Dorsolateral prefrontal cortex (tissue), 120 donors: ENCODE measurements at regions of chr5 and their contacts with region 1.

Region 1: DNA sequence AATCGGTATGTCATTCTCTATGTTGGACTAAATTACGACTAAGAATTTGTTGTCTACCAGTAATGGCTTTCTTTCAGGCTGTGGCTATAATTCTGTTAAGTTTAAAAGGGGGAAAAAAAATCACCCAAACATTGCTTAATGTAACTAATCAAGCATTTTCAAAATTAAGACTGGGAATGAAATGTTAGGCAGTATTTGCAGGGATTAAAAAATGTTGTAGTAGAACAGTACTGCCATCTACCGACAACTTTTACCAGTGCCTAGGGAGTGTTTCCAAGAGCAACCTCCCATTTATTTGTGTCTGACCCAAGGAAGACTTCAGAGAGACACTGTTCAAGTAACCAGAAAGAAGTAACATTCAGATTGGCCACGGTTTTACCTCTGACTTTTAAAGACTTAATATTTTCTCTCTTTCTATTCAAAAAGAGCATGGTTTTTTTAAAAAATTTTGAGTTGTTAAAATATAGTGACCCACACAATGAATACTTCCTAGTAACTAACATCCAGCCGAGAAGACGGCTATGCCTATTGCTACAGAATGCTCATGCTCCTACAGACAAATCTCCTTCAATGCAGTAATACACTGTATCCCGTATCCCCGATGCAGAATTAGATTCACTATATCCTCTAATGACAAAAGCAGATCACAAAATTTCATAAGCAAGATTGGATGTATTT is 92.4 kb downstream of the ARL15 start:
- DNase-seq: peak in 1 of 10 donors; percentile 16
- H3K4me3 ChIP-seq: no peak overlapping the region
- H3K27ac ChIP-seq: no peak overlapping the region
- H3K27me3 ChIP-seq: no peaks in the 10 kb centered on the region
- CTCF ChIP-seq: peak; percentile 64 to 94 (median 82)

Region 2: GRCh38 chr5:53123702-53124101 is 1094.3 kb before region 1 on chr5:
- intact Hi-C with region 1: loop called in 1 of 2 experiments (anchors 5 kb)
- DNase-seq: no peak
- H3K4me3 ChIP-seq: no peak overlapping the region
- H3K27ac ChIP-seq: no peak overlapping the region
- H3K27me3 ChIP-seq: no peaks in the 10 kb centered on the region
- CTCF ChIP-seq: peak in 40 of 56 donors; percentile 10 to 63 (median 28)

Region 3: GRCh38 chr5:53170748-53171349 is 1047.1 kb before region 1 on chr5:
- intact Hi-C with region 1: loop called (anchors 5 to 10 kb)
- DNase-seq: no peak
- H3K4me3 ChIP-seq: no peak overlapping the region
- H3K27ac ChIP-seq: no peak overlapping the region
- H3K27me3 ChIP-seq: peaks cover 0 to 7% (median 0%) of the 10 kb centered on the region in 45 donors
- CTCF ChIP-seq: peak; percentile 21 to 78 (median 58)

Region 4: GRCh38 chr5:53481887-53482716 is 735.9 kb before region 1 on chr5:
- intact Hi-C with region 1: loop called (anchors 2 to 10 kb)
- DNase-seq: peak in 7 of 10 donors; percentile 14 to 65 (median 44)
- H3K4me3 ChIP-seq: peak overlapping the region; percentile 32 to 83 (median 61)
- H3K27ac ChIP-seq: no peak overlapping the region
- H3K27me3 ChIP-seq: peaks cover 0 to 28% (median 4%) of the 10 kb centered on the region in 45 donors
- CTCF ChIP-seq: peak in 12 of 56 donors; percentile 5 to 34 (median 18)

Region 5: GRCh38 chr5:54738118-54738972 is 520.4 kb after region 1 on chr5:
- intact Hi-C with region 1: no loop called
- DNase-seq: peak in 4 of 10 donors; percentile 12 to 61 (median 35)
- H3K4me3 ChIP-seq: no peak overlapping the region
- H3K27ac ChIP-seq: no peak overlapping the region
- H3K27me3 ChIP-seq: no peaks in the 10 kb centered on the region
- CTCF ChIP-seq: no peak